Heart left ventricle (tissue), 16 donors: ENCODE measurements at regions of chr3 and their contacts with region 1.

Region 1: GRCh38 chr3:133661454-133662277 is at the start of gene TOPBP1:
- DNase-seq: peak; percentile 81 to 90 (median 84)
- ATAC-seq: peak; percentile 57 to 95 (median 94)
- H3K4me3 ChIP-seq: peak within 1 kb of the TSS; percentile 75 to 92 (median 85)
- H3K27ac ChIP-seq: peak within 1 kb of the TSS; percentile 50 to 92 (median 82)
- H3K4me1 ChIP-seq: peaks cover 0 to 30% (median 15%) of the 10 kb centered on the region in 12 donors
- H3K27me3 ChIP-seq: no peaks in the 10 kb centered on the region
- CTCF ChIP-seq: no peak
- POLR2A ChIP-seq: peak in 1 of 2 donors; percentile 12
- total RNA-seq, gene TOPBP1: 7.9 to 18.3 (median 11.8) TPM

Region 2: DNA sequence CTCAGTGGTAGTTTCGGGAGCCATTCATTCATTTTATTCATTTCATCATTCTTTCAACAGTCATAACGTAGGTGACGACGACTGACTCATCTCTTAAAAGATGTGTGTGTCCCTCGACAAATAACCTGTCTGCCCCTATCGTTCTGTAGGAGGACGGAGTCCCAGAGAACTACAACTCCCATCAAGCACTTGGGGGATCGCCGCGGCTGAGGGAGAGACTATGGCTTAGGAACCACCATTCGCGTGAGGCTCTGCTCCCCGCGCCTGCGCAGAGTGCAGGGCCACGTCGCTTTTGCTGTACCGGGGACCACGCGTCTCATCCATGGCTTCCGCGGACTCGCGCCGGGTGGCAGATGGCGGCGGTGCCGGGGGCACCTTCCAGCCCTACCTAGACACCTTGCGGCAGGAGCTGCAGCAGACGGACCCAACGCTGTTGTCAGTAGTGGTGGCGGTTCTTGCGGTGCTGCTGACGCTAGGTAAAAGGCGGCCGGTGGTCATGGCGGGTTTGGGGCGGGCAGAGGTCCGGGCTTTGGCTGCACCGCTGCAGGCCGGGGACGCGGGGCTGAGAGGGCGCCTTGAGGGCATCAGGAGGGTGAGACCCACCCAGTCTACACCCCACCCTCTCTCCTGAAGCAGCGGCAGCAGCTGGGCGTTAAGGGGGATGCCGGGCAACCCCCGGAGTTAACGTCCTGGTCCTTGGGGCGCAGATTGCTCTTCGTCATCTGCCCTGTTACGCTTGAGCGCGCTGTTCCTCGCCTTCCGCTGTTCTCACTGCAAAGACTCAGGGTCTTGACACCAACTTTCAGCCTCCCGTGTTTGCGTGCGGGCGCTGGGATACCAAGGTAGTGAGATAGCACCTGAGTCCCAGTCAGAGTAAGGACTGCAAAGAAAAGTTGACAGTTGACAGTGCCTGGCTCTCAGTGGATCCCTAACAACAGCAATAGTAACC is 144.1 kb after region 1 on chr3 and contains the start of gene SRPRB:
- intact Hi-C with region 1: loop called in 7 of 10 experiments (anchors 5 to 10 kb)
- DNase-seq: peak; percentile 94 to 98 (median 96)
- ATAC-seq: peak; percentile 100
- H3K4me3 ChIP-seq: peak within 1 kb of the TSS; percentile 61 to 95 (median 82)
- H3K27ac ChIP-seq: peak within 1 kb of the TSS in 11 of 12 donors; percentile 41 to 80 (median 67)
- H3K4me1 ChIP-seq: peaks cover 0 to 18% (median 8%) of the 10 kb centered on the region in 12 donors
- H3K27me3 ChIP-seq: peaks cover 0 to 6% (median 0%) of the 10 kb centered on the region in 9 donors
- CTCF ChIP-seq: no peak
- POLR2A ChIP-seq: peak in 1 of 2 donors; percentile 77
- total RNA-seq, gene SRPRB: 13.7 to 35.9 (median 24.9) TPM

Region 3: GRCh38 chr3:133812872-133813271 is 151.2 kb after region 1 on chr3:
- intact Hi-C with region 1: loop called in 7 of 10 experiments (anchors 5 to 10 kb)
- DNase-seq: no peak
- ATAC-seq: peak in 1 of 4 donors; percentile 60
- H3K4me3 ChIP-seq: no peak overlapping the region
- H3K27ac ChIP-seq: no peak overlapping the region
- H3K4me1 ChIP-seq: peaks cover 0 to 10% (median 0%) of the 10 kb centered on the region in 12 donors
- H3K27me3 ChIP-seq: no peaks in the 10 kb centered on the region
- CTCF ChIP-seq: no peak
- POLR2A ChIP-seq: no peak

Region 4: GRCh38 chr3:133901083-133901482 is 239.4 kb after region 1 on chr3:
- intact Hi-C with region 1: loop called in 2 of 10 experiments (anchors 10 kb)
- DNase-seq: no peak
- ATAC-seq: peak in 3 of 4 donors; percentile 55 to 71 (median 63)
- H3K4me3 ChIP-seq: no peak overlapping the region
- H3K27ac ChIP-seq: no peak overlapping the region
- H3K4me1 ChIP-seq: peaks cover 0 to 5% (median 2%) of the 10 kb centered on the region in 12 donors
- H3K27me3 ChIP-seq: peaks cover 0 to 8% (median 0%) of the 10 kb centered on the region in 9 donors
- CTCF ChIP-seq: peak; percentile 10 to 55 (median 48)
- POLR2A ChIP-seq: no peak